Spleen (tissue), 13 donors: ENCODE measurements at regions of chr15 and their contacts with region 1.

Region 1: DNA sequence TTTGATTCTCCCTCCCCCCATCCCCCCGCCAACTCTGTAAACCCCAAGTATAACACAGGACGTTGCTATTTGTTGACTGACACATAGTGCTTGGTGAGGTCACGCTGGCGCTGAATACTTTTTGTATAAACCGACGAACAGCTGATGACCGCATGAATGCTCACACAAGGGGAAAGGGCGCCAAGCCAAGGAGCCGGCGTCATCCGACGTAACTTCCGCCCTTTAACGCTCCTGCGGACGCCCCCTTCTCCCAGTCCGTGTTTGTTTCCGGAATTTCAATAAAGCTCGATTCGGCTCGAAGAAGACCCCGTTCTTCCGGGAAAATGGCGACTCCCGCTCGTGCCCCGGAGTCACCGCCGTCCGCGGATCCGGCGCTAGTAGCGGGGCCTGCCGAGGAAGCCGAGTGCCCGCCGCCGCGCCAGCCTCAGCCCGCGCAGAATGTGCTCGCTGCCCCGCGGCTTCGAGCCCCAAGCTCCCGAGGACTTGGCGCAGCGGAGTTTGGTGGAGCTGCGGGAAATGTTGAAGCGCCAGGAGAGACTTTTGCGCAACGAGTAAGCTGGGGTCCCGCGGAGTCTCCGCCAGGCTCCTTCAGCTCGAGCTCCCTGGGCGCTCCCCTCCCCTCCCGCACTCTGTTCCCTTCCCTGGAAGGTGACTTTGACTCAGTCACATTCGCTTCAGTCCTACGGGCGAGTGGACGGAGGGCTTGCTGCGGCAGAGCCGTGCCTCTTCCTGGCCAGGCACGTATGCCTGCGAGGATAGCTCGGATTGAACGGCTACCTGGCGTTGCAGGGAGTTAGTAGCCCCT is at the start of gene POLR2M:
- DNase-seq: peak; percentile 95
- H3K4me3 ChIP-seq: peak within 1 kb of the TSS; percentile 66 to 90 (median 79)
- H3K27ac ChIP-seq: peak within 1 kb of the TSS; percentile 88 to 97 (median 94)
- H3K4me1 ChIP-seq: peaks cover 10 to 54% (median 38%) of the 10 kb centered on the region in 6 donors
- H3K27me3 ChIP-seq: no peaks in the 10 kb centered on the region
- CTCF ChIP-seq: no peak
- POLR2A ChIP-seq: peak in 1 of 3 donors; percentile 22
- total RNA-seq, gene POLR2M: 34.1 to 152 (median 73.3) TPM

Region 2: GRCh38 chr15:57561041-57561711 is 145.4 kb before region 1 on chr15:
- intact Hi-C with region 1: loop called (anchors 5 kb)
- DNase-seq: peak; percentile 84
- H3K4me3 ChIP-seq: peak overlapping the region in 1 of 8 donors; percentile 28
- H3K27ac ChIP-seq: peak overlapping the region in 7 of 8 donors; percentile 30 to 70 (median 61)
- H3K4me1 ChIP-seq: peaks cover 0 to 27% (median 17%) of the 10 kb centered on the region in 6 donors
- H3K27me3 ChIP-seq: peaks cover 0 to 22% (median 0%) of the 10 kb centered on the region in 7 donors
- CTCF ChIP-seq: peak; percentile 70 to 90 (median 88)
- POLR2A ChIP-seq: no peak

Region 3: DNA sequence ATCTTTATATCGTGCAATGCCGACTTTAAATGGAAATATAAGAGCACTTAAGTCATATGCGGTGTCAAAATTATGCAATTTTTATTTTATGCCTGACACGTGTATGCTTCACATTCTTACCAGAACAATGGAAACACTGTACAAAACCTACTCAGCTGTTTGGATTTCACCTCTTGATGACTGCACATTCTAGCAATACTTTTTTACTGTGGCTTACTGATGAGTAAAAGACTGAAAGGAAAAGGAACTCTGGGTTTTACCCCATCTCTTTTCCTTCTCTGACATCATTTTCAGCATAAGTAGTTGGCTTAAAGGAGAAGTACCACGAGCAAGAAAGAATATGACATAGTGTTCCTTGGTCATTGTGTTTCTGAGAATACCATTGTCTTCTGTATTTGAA is 142.7 kb after region 1 on chr15:
- intact Hi-C with region 1: no loop called
- DNase-seq: no peak
- H3K4me3 ChIP-seq: no peak overlapping the region
- H3K27ac ChIP-seq: no peak overlapping the region
- H3K4me1 ChIP-seq: no peaks in the 10 kb centered on the region
- H3K27me3 ChIP-seq: no peaks in the 10 kb centered on the region
- CTCF ChIP-seq: no peak
- POLR2A ChIP-seq: no peak